Dorsolateral prefrontal cortex (tissue), 120 donors: ENCODE measurements at regions of chr3 and their contacts with region 1.

Region 1: GRCh38 chr3:197749601-197750395 is at the start of gene FYTTD1:
- DNase-seq: peak; percentile 85 to 97 (median 92)
- H3K4me3 ChIP-seq: peak within 1 kb of the TSS; percentile 63 to 96 (median 87)
- H3K27ac ChIP-seq: peak within 1 kb of the TSS; percentile 72 to 99 (median 96)
- H3K27me3 ChIP-seq: no peaks in the 10 kb centered on the region
- CTCF ChIP-seq: peak in 55 of 56 donors; percentile 15 to 76 (median 55)
- total RNA-seq, gene FYTTD1: 31.0 to 60.1 (median 47.7) TPM

Region 2: GRCh38 chr3:197613199-197613598 is 136.6 kb before region 1 on chr3:
- intact Hi-C with region 1: no loop called
- DNase-seq: no peak
- H3K4me3 ChIP-seq: no peak overlapping the region
- H3K27ac ChIP-seq: no peak overlapping the region
- H3K27me3 ChIP-seq: no peaks in the 10 kb centered on the region
- CTCF ChIP-seq: no peak

Region 3: GRCh38 chr3:197711973-197712707 is 37.7 kb before region 1 on chr3:
- intact Hi-C with region 1: loop called in 1 of 2 experiments (anchors 1 kb)
- DNase-seq: peak; percentile 51 to 94 (median 85)
- H3K4me3 ChIP-seq: peak overlapping the region; percentile 26 to 67 (median 51)
- H3K27ac ChIP-seq: peak overlapping the region; percentile 76 to 98 (median 94)
- H3K27me3 ChIP-seq: no peaks in the 10 kb centered on the region
- CTCF ChIP-seq: peak in 10 of 56 donors; percentile 5 to 37 (median 14)

Region 4: DNA sequence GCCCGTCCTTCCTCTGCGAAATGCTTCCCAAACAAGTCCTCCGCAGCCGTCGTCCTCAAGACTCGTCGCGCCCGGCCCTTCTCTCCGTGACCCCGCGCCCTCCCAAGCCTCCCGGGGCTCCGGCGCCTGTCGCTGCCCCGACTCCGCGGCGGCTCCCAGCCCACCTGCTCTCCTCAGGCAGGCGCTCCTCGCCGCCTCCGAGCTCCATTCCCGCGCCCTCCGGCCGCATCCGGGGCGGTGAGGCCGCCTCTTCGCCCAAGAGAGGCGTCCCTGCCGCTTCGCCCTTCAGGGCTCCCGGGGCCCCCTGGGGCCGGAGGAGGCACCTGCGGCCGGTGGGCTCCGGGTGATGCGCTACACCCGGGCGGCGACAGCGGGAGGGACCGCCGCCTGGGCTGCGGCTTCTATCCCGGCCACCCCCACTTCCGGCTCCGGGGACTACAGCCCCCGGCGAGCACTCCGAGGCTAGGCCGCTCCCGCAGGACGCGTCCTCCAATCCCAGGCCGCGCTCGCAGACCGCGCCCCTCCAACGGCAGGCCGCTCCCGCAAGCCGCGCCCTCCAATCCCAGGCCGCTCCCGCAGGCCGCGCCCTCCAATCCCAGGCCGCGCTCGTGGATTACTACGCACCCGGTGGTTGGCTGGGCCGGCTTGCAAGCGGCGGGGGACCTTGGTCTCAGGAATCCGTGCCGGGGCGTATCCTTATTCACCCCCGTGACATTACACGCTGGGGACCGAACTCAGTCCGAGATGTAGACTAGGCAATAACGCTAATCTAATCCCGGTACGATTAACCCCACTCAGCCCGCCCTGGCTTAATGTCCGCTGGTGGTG is 13.1 kb before region 1 on chr3 and contains the start of gene RUBCN:
- intact Hi-C with region 1: loop called (anchors 1 to 2 kb)
- DNase-seq: peak; percentile 87 to 98 (median 95)
- H3K4me3 ChIP-seq: peak within 1 kb of the TSS; percentile 68 to 99 (median 93)
- H3K27ac ChIP-seq: peak within 1 kb of the TSS; percentile 44 to 96 (median 87)
- H3K27me3 ChIP-seq: no peaks in the 10 kb centered on the region
- CTCF ChIP-seq: peak in 35 of 56 donors; percentile 6 to 58 (median 29)
- total RNA-seq, gene RUBCN: 53.9 to 114 (median 81.9) TPM

Region 5: DNA sequence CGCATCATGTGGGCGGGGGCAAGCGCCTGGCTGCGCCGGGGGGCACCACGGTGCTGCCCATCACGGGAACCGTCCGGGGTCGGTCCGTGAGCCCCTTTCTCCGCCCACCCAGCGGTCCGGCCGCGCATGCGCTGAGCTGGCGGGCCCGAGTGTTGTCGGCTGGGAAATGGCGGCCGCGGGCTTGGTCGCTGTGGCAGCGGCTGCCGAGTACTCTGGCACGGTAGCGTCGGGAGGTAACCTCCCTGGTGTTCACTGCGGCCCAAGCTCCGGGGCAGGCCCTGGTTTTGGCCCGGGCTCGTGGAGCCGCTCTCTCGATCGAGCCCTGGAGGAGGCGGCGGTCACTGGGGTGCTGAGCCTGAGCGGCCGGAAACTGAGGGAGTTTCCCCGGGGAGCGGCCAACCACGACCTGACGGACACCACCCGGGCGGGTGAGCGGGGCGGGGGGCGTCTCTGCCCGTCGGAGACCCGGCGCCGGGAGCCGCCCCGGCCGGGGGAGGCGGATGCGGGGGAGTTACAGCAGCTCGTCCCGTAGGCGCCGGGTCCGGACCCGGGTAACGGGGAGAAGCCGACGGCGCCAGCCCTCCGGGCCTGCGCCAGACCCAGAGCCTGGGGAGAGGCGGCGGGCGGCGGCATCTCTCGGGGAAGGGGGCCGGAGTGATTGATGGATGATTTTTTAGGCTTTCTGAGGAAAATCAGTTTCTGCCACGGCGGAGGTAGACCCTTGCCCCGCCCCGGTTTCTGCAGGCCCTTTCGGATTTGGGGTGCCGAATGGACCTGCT is 41.5 kb after region 1 on chr3 and contains the start of gene LRCH3:
- intact Hi-C with region 1: loop called (anchors 1 to 5 kb)
- DNase-seq: peak; percentile 60 to 88 (median 72)
- H3K4me3 ChIP-seq: peak within 1 kb of the TSS; percentile 69 to 98 (median 90)
- H3K27ac ChIP-seq: peak within 1 kb of the TSS; percentile 68 to 98 (median 94)
- H3K27me3 ChIP-seq: no peaks in the 10 kb centered on the region
- CTCF ChIP-seq: peak in 21 of 56 donors; percentile 5 to 45 (median 18)
- total RNA-seq, gene LRCH3: 42.2 to 98.1 (median 64.6) TPM

Region 6: DNA sequence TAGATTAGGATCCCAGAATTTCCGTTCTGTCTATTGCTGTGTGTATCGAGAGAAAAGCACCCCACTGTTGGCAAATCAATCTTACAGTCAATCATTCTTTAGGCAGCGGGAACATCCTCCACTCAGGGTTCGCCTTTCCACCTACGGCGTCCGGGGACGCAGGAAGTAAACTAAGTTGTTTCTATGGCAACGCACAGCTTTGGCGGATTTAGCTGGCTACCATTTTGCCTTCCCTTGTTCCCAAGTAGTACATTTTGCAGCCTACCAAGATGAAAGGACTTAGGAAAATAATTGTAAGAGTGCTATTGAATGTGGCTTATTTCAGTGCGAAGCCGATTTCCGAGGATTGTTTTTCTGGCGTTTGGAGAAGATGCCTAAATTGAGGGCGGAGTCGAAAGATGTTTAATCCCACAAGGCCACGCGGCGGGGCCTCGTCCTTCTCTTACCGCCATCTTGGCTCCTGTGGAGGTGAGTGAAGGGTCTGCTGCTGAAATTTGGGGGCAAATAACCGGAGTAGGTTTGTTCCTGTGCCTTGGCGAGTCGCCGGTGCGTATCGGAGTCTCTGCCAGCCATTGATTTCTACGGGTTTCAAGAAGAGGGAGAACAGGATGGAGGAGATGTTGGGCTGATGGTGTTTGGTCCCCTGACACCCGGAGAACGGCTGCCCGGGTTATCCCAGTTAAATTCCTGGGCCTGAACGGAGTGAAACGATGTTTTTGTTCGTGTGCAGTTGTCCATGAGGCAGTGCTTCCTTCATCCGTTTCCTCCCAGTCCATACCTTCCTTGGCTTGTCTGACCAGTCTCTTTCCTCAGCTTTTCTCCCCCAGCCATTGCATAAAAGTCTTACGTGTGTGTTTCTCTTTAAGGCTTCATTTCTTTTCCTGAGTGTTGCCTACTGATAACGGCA is 200.2 kb after region 1 on chr3 and contains the start of gene RPL35A:
- intact Hi-C with region 1: loop called in 1 of 2 experiments (anchors 5 kb)
- DNase-seq: peak; percentile 75 to 89 (median 84)
- H3K4me3 ChIP-seq: peak within 1 kb of the TSS; percentile 47 to 92 (median 78)
- H3K27ac ChIP-seq: peak within 1 kb of the TSS; percentile 63 to 100 (median 97)
- H3K27me3 ChIP-seq: no peaks in the 10 kb centered on the region
- CTCF ChIP-seq: peak in 21 of 56 donors; percentile 5 to 34 (median 23)
- total RNA-seq, gene RPL35A: 229 to 428 (median 332) TPM